ENCODE measurements at regions of chr14 and their contacts with region 1.

Region 1: GRCh38 chr14:38867561-38868150 is 235.4 kb downstream of the SEC23A start:
- DNase-seq: peak; percentile 31 to 48 (median 41)
- H3K4me3 ChIP-seq: no peak overlapping the region
- H3K4me3 Mint-ChIP-seq: no peak overlapping the region
- H3K27ac ChIP-seq: no peak overlapping the region
- H3K27ac Mint-ChIP-seq: no peak overlapping the region
- H3K4me1 ChIP-seq: no peaks in the 10 kb centered on the region
- H3K4me1 Mint-ChIP-seq: no peaks in the 10 kb centered on the region
- H3K27me3 ChIP-seq: no peaks in the 10 kb centered on the region
- H3K27me3 Mint-ChIP-seq: peaks cover 0 to 3% of the 10 kb centered on the region in 2 donors

Region 2: GRCh38 chr14:37230551-37231194 is 1637.0 kb before region 1 on chr14:
- CTCF ChIA-PET with region 1: no interaction called
- POLR2A ChIA-PET with region 1: no interaction called
- intact Hi-C with region 1: loop called (anchors 5 kb)
- DNase-seq: peak in 4 of 5 donors; percentile 7 to 25 (median 16)
- H3K4me3 ChIP-seq: no peak overlapping the region
- H3K4me3 Mint-ChIP-seq: no peak overlapping the region
- H3K27ac ChIP-seq: no peak overlapping the region
- H3K27ac Mint-ChIP-seq: no peak overlapping the region
- H3K4me1 ChIP-seq: no peaks in the 10 kb centered on the region
- H3K4me1 Mint-ChIP-seq: no peaks in the 10 kb centered on the region
- H3K27me3 ChIP-seq: no peaks in the 10 kb centered on the region
- H3K27me3 Mint-ChIP-seq: no peaks in the 10 kb centered on the region

Region 3: GRCh38 chr14:37246427-37246914 is 1621.2 kb before region 1 on chr14:
- CTCF ChIA-PET with region 1: no interaction called
- POLR2A ChIA-PET with region 1: no interaction called
- intact Hi-C with region 1: loop called (anchors 2 kb)
- DNase-seq: peak in 3 of 5 donors; percentile 4 to 15 (median 4)
- H3K4me3 ChIP-seq: no peak overlapping the region
- H3K4me3 Mint-ChIP-seq: no peak overlapping the region
- H3K27ac ChIP-seq: no peak overlapping the region
- H3K27ac Mint-ChIP-seq: no peak overlapping the region
- H3K4me1 ChIP-seq: no peaks in the 10 kb centered on the region
- H3K4me1 Mint-ChIP-seq: no peaks in the 10 kb centered on the region
- H3K27me3 ChIP-seq: no peaks in the 10 kb centered on the region
- H3K27me3 Mint-ChIP-seq: no peaks in the 10 kb centered on the region

Region 4: GRCh38 chr14:37985826-37986470 is 881.7 kb before region 1 on chr14:
- CTCF ChIA-PET with region 1: no interaction called
- POLR2A ChIA-PET with region 1: no interaction called
- intact Hi-C with region 1: loop called (anchors 5 kb)
- DNase-seq: peak; percentile 35 to 55 (median 48)
- H3K4me3 ChIP-seq: no peak overlapping the region
- H3K4me3 Mint-ChIP-seq: no peak overlapping the region
- H3K27ac ChIP-seq: no peak overlapping the region
- H3K27ac Mint-ChIP-seq: no peak overlapping the region
- H3K4me1 ChIP-seq: no peaks in the 10 kb centered on the region
- H3K4me1 Mint-ChIP-seq: peaks cover 5 to 6% (median 5%) of the 10 kb centered on the region in 4 donors
- H3K27me3 ChIP-seq: no peaks in the 10 kb centered on the region
- H3K27me3 Mint-ChIP-seq: no peaks in the 10 kb centered on the region

Region 5: GRCh38 chr14:39060818-39061437 is 193.3 kb after region 1 on chr14:
- CTCF ChIA-PET with region 1: no interaction called
- POLR2A ChIA-PET with region 1: no interaction called
- intact Hi-C with region 1: no loop called
- DNase-seq: no peak
- H3K4me3 ChIP-seq: no peak overlapping the region
- H3K4me3 Mint-ChIP-seq: no peak overlapping the region
- H3K27ac ChIP-seq: no peak overlapping the region
- H3K27ac Mint-ChIP-seq: no peak overlapping the region
- H3K4me1 ChIP-seq: no peaks in the 10 kb centered on the region
- H3K4me1 Mint-ChIP-seq: peaks cover 0 to 1% (median 0%) of the 10 kb centered on the region in 4 donors
- H3K27me3 ChIP-seq: no peaks in the 10 kb centered on the region
- H3K27me3 Mint-ChIP-seq: no peaks in the 10 kb centered on the region